IMR-90 (cell line): ENCODE measurements at regions of chr14 and their contacts with region 1.

Region 1: DNA sequence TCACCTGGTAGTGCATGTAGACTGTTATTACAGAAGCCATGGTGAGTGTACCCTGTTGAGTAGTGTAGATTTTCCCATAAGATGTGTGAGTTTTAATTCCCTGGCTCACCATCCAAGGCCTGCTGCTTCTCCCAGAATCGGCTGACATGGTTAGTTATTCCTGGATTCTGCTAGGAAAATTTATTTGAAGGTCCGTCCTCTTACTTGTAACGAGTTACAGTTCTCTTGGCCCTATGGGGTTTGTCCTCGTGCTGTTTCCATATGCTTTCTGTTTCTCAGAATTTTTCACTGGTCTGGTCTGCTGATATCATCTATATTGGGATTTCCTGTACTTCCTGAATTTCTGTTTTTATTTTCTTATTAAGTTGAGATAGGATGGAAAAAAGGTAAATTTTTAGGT is 423.3 kb upstream of the RGS6 start:
- DNase-seq: no peak
- ATAC-seq: no peak
- H3K4me3 ChIP-seq: no peak overlapping the region
- H3K27ac ChIP-seq: no peak overlapping the region
- H3K4me1 ChIP-seq: no peaks in the 10 kb centered on the region
- H3K27me3 ChIP-seq: no peaks in the 10 kb centered on the region
- CTCF ChIP-seq: no peak
- POLR2A ChIP-seq: no peak
- RAD21 ChIP-seq: no peak

Region 2: DNA sequence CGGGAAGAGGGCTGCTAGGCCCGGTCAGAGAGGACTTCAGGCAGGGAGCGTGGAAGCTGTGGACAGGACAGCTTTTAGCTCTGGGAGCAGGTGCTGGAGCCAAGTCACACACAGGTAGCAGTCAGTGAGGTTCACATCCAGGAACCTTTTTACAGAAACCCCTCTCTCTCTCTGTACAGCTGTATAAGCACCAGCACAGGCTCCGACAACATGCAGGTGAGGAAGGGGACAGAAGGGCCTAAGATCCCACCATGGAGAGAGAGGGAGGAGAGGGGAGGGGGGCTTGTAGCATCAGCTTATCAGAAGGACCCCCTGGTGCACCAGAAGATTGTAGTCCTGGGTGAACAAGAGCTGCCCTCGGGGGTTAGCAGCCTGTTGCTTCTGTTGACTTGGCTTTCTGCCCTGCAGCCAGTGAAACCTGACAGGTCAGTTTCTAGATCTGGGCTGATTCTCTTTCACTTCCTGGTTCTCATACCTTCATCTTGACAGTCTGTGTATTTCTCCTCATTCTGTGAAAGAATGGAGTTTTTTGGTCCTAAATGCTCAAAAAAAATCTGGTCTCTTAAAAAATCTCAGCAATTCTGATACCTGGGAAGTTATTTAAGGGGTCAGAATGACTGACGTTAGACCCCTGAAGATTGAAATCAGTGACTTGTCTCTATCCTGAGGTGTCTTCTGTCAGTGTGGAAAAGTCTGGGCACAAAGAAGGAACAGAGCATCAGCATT is 843.5 kb before region 1 on chr14:
- CTCF ChIA-PET with region 1: no interaction called
- POLR2A ChIA-PET with region 1: interaction called, 13 read pairs
- dilution Hi-C with region 1: no loop called
- in situ Hi-C with region 1: no loop called
- intact Hi-C with region 1: no loop called
- DNase-seq: no peak
- ATAC-seq: no peak
- H3K4me3 ChIP-seq: no peak overlapping the region
- H3K27ac ChIP-seq: no peak overlapping the region
- H3K4me1 ChIP-seq: peaks cover 1% of the 10 kb centered on the region; the same call in 1 of the 2 replicates
- H3K27me3 ChIP-seq: peaks cover 5% of the 10 kb centered on the region; the same call in 1 of the 2 replicates
- CTCF ChIP-seq: no peak
- POLR2A ChIP-seq: no peak
- RAD21 ChIP-seq: no peak

Region 3: GRCh38 chr14:71328183-71328582 is 180.7 kb before region 1 on chr14:
- CTCF ChIA-PET with region 1: no interaction called
- POLR2A ChIA-PET with region 1: interaction called, 10 read pairs
- dilution Hi-C with region 1: no loop called
- in situ Hi-C with region 1: no loop called
- intact Hi-C with region 1: no loop called
- DNase-seq: no peak
- ATAC-seq: no peak; the same call in 1 of the 2 replicates
- H3K4me3 ChIP-seq: no peak overlapping the region
- H3K27ac ChIP-seq: no peak overlapping the region
- H3K4me1 ChIP-seq: peaks cover 8% of the 10 kb centered on the region
- H3K27me3 ChIP-seq: no peaks in the 10 kb centered on the region
- CTCF ChIP-seq: no peak
- POLR2A ChIP-seq: no peak
- RAD21 ChIP-seq: no peak

Region 4: GRCh38 chr14:71395151-71395604 is 113.7 kb before region 1 on chr14:
- CTCF ChIA-PET with region 1: no interaction called
- POLR2A ChIA-PET with region 1: no interaction called
- dilution Hi-C with region 1: no loop called
- in situ Hi-C with region 1: no loop called
- intact Hi-C with region 1: no loop called
- DNase-seq: no peak
- ATAC-seq: no peak
- H3K4me3 ChIP-seq: no peak overlapping the region
- H3K27ac ChIP-seq: no peak overlapping the region
- H3K4me1 ChIP-seq: peaks cover 2% of the 10 kb centered on the region; the same call in 1 of the 2 replicates
- H3K27me3 ChIP-seq: no peaks in the 10 kb centered on the region
- CTCF ChIP-seq: no peak
- POLR2A ChIP-seq: no peak
- RAD21 ChIP-seq: no peak

Region 5: GRCh38 chr14:71555654-71556559 is 47.0 kb after region 1 on chr14:
- CTCF ChIA-PET with region 1: no interaction called
- POLR2A ChIA-PET with region 1: no interaction called
- dilution Hi-C with region 1: no loop called
- in situ Hi-C with region 1: no loop called
- intact Hi-C with region 1: no loop called
- DNase-seq: peak; percentile 43
- ATAC-seq: no peak
- H3K4me3 ChIP-seq: no peak overlapping the region
- H3K27ac ChIP-seq: no peak overlapping the region
- H3K4me1 ChIP-seq: peaks cover 8% of the 10 kb centered on the region
- H3K27me3 ChIP-seq: no peaks in the 10 kb centered on the region
- CTCF ChIP-seq: no peak
- POLR2A ChIP-seq: no peak
- RAD21 ChIP-seq: no peak

Region 6: DNA sequence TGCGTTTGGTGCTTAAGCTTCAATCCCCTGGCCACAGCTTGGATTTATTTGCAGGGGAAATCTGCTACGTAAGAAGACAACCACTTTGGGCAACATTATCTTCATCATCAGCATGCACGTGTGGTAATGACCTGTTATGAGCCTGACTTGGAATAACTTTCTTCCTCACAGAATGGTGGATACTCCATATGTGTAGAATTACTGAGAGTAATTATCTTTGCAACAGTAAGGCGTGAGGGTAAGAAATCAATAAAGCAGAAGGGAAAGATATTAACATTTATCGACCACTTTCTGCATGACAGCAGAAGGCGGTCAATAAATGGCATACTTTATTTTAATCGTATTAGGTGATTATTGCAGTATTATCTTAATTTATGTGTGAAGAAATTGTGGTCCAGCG is 576.0 kb after region 1 on chr14:
- CTCF ChIA-PET with region 1: no interaction called
- POLR2A ChIA-PET with region 1: no interaction called
- dilution Hi-C with region 1: no loop called
- in situ Hi-C with region 1: no loop called
- intact Hi-C with region 1: no loop called
- DNase-seq: no peak
- ATAC-seq: no peak
- H3K4me3 ChIP-seq: no peak overlapping the region
- H3K27ac ChIP-seq: no peak overlapping the region
- H3K4me1 ChIP-seq: no peaks in the 10 kb centered on the region
- H3K27me3 ChIP-seq: no peaks in the 10 kb centered on the region
- CTCF ChIP-seq: no peak
- POLR2A ChIP-seq: no peak
- RAD21 ChIP-seq: no peak